ENCODE measurements at regions of chr12 and their contacts with region 1.

Region 1: GRCh38 chr12:15220994-15221885 is at the start of gene RERG:
- DNase-seq: peak; percentile 91
- H3K4me3 ChIP-seq: peak within 1 kb of the TSS; percentile 55 to 70 (median 61)
- H3K27ac ChIP-seq: peak within 1 kb of the TSS; percentile 78 to 88 (median 86)
- H3K4me1 ChIP-seq: peaks cover 0 to 38% (median 8%) of the 10 kb centered on the region in 4 donors
- H3K27me3 ChIP-seq: no peaks in the 10 kb centered on the region
- CTCF ChIP-seq: peak; percentile 91 to 99 (median 97)
- EP300 ChIP-seq: no peak
- POLR2A ChIP-seq: no peak
- total RNA-seq, gene RERG: 69.9 to 104 (median 78.3) TPM

Region 2: DNA sequence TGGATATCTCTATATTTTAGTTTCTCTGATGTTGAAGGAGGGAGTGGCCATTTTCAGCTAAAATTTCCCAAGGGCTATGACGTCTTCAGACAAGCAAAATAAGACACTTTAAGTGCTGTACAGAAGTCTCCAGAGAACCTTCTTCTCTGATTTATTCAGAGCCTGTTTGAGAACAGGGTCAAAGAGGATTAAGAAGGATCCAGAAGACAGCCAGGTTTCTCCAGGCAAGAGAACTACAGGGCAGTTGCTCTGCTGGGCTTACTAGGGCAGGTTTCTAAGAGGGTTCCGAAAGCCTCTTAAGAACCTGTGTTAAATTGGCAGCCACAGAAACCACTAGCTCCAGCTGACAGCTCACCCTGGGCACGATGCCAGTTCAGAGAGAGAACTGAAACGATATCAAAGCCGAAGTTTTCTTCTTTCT is 336.8 kb before region 1 on chr12:
- intact Hi-C with region 1: loop called (anchors 5 kb)
- DNase-seq: peak; percentile 95
- H3K4me3 ChIP-seq: peak overlapping the region; percentile 34 to 52 (median 46)
- H3K27ac ChIP-seq: peak overlapping the region; percentile 82 to 87 (median 82)
- H3K4me1 ChIP-seq: peaks cover 0 to 16% (median 13%) of the 10 kb centered on the region in 4 donors
- H3K27me3 ChIP-seq: no peaks in the 10 kb centered on the region
- CTCF ChIP-seq: no peak
- EP300 ChIP-seq: peak in 1 of 4 donors; percentile 18
- POLR2A ChIP-seq: peak; percentile 12 to 20

Region 3: GRCh38 chr12:15001733-15002382 is 219.4 kb before region 1 on chr12:
- intact Hi-C with region 1: loop called (anchors 1 kb)
- DNase-seq: peak; percentile 91
- H3K4me3 ChIP-seq: peak overlapping the region in 2 of 4 donors; percentile 6 to 12
- H3K27ac ChIP-seq: peak overlapping the region; percentile 64 to 85 (median 74)
- H3K4me1 ChIP-seq: peaks cover 0 to 71% (median 47%) of the 10 kb centered on the region in 4 donors
- H3K27me3 ChIP-seq: no peaks in the 10 kb centered on the region
- CTCF ChIP-seq: no peak
- EP300 ChIP-seq: peak in 1 of 4 donors; percentile 2
- POLR2A ChIP-seq: no peak

Region 4: GRCh38 chr12:15268927-15269552 is 47.8 kb after region 1 on chr12:
- intact Hi-C with region 1: loop called (anchors 2 kb)
- DNase-seq: peak; percentile 72
- H3K4me3 ChIP-seq: no peak overlapping the region
- H3K27ac ChIP-seq: peak overlapping the region in 2 of 4 donors; percentile 16 to 36
- H3K4me1 ChIP-seq: peaks cover 0 to 15% (median 10%) of the 10 kb centered on the region in 4 donors
- H3K27me3 ChIP-seq: no peaks in the 10 kb centered on the region
- CTCF ChIP-seq: peak; percentile 78 to 90 (median 84)
- EP300 ChIP-seq: no peak
- POLR2A ChIP-seq: no peak

Region 5: DNA sequence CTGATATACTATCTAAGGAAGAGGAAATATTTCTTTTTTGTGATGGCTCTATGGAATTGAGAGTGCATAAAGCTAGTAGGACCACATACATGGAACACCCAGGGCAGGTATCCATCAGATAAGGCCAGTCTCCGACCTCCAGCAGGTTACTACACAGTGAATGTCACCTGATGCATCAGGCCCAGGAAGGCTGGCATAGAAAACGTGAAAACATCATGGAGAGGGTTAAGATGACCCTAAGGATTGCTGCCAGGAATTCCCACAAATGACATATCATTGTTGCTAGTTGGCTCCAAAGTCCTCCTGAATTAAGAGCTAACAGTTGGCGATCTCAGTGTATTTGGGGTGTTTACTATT is 58.4 kb after region 1 on chr12:
- intact Hi-C with region 1: no loop called
- DNase-seq: no peak
- H3K4me3 ChIP-seq: no peak overlapping the region
- H3K27ac ChIP-seq: peak overlapping the region; percentile 55 to 79 (median 65)
- H3K4me1 ChIP-seq: peaks cover 0 to 37% (median 30%) of the 10 kb centered on the region in 4 donors
- H3K27me3 ChIP-seq: no peaks in the 10 kb centered on the region
- CTCF ChIP-seq: no peak
- EP300 ChIP-seq: no peak
- POLR2A ChIP-seq: no peak

Measured in sigmoid colon (tissue), 7 donors.